ENCODE measurements at regions of chr14 and their contacts with region 1.

Region 1: DNA sequence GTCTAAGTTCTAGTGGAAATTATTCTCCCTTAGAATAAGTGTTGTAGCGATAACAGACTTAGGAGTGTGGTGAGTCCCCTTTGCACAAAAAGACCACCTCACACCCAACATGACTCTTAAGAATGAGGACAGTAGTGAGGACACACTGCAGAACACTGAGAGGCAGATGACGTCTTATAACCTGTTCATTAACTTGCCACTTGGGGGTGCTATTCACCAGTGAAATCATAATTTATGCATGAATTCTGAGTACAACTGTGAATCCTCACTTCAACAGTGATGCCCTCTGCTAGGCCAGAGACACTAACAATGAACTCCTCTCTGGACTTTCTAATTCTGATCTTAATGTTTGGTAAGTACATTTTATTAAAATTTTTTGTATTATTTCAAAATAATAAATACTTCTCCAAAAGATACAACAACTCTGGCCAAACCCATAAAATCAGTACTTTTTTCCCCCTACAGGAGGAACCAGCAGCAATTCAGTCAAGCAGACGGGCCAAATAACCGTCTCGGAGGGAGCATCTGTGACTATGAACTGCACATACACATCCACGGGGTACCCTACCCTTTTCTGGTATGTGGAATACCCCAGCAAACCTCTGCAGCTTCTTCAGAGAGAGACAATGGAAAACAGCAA is 274.7 kb downstream of the DAD1 start:
- DNase-seq: no peak
- H3K4me3 ChIP-seq: no peak overlapping the region
- H3K27ac ChIP-seq: peak overlapping the region; percentile 28 to 45
- H3K4me1 ChIP-seq: peaks cover 0 to 23% (median 5%) of the 10 kb centered on the region in 4 donors
- H3K27me3 ChIP-seq: no peaks in the 10 kb centered on the region
- CTCF ChIP-seq: peak; percentile 59 to 63

Region 2: DNA sequence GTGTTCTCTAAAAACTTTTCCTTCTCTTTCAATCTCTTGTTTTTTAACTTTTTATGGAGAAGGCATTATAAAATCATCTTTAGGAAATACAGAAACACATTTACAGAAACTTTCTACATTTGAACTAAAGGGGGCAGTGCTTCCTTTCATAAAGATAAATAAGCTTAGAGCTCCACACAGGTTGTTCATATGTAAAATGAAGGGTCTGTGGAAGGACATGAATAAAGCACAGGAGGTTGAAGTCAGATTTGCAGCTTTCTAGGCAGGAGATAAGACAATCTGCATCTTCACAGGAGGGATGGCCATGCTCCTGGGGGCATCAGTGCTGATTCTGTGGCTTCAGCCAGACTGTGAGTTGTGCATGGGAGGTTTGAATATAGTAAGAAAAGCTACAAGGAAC is 151.2 kb before region 1 on chr14:
- intact Hi-C with region 1: no loop called
- DNase-seq: no peak
- H3K4me3 ChIP-seq: no peak overlapping the region
- H3K27ac ChIP-seq: no peak overlapping the region
- H3K4me1 ChIP-seq: no peaks in the 10 kb centered on the region
- H3K27me3 ChIP-seq: no peaks in the 10 kb centered on the region
- CTCF ChIP-seq: no peak

Region 3: GRCh38 chr14:22231018-22231417 is 83.3 kb before region 1 on chr14:
- intact Hi-C with region 1: no loop called
- DNase-seq: no peak
- H3K4me3 ChIP-seq: no peak overlapping the region
- H3K27ac ChIP-seq: no peak overlapping the region
- H3K4me1 ChIP-seq: peaks cover 0 to 13% (median 1%) of the 10 kb centered on the region in 4 donors
- H3K27me3 ChIP-seq: no peaks in the 10 kb centered on the region
- CTCF ChIP-seq: no peak

Region 4: GRCh38 chr14:22276913-22277816 is 37.1 kb before region 1 on chr14:
- intact Hi-C with region 1: loop called (anchors 5 kb)
- DNase-seq: no peak
- H3K4me3 ChIP-seq: no peak overlapping the region
- H3K27ac ChIP-seq: peak overlapping the region in 1 of 2 donors; percentile 47
- H3K4me1 ChIP-seq: peaks cover 0 to 52% (median 9%) of the 10 kb centered on the region in 4 donors
- H3K27me3 ChIP-seq: no peaks in the 10 kb centered on the region
- CTCF ChIP-seq: peak; percentile 50 to 63